ENCODE measurements at regions of chr6 and their contacts with region 1.

Region 1: DNA sequence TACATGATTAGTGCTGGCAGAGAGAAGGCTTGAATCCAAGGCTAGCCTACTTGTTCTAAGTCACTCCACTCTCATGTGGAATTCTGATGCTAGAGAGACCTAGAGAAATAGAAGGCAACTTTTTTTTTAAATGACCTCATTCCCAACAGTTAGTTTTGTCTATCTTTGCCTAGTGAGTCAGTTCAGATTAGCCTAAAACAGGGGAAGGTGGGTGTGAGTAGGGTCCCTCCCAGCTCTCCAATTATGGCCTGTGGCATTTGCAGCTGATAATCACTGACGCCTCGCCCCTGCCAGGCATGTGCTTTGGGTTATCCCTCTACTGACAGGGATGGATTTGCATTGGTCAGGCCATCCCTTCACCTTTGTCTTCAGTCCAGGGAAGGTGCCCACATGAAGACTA is 13.6 kb downstream of the TXLNB start:
- DNase-seq: no peak
- ATAC-seq: no peak
- H3K4me3 ChIP-seq: no peak overlapping the region
- H3K4me3 Mint-ChIP-seq: peak overlapping the region; percentile 30
- H3K27ac ChIP-seq: peak overlapping the region; percentile 36 to 79
- H3K27ac Mint-ChIP-seq: peak overlapping the region; percentile 96
- H3K4me1 ChIP-seq: peaks cover 36 to 39% of the 10 kb centered on the region in 2 donors
- H3K4me1 Mint-ChIP-seq: peaks cover 69% of the 10 kb centered on the region
- H3K27me3 ChIP-seq: no peaks in the 10 kb centered on the region
- H3K27me3 Mint-ChIP-seq: no peaks in the 10 kb centered on the region
- CTCF ChIP-seq: no peak

Region 2: GRCh38 chr6:139265512-139266190 is 12.5 kb before region 1 on chr6:
- CTCF ChIA-PET with region 1: interaction called, 4 read pairs
- POLR2A ChIA-PET with region 1: interaction called, 10 read pairs
- intact Hi-C with region 1: loop called (anchors 1 kb)
- DNase-seq: no peak
- ATAC-seq: no peak
- H3K4me3 ChIP-seq: no peak overlapping the region
- H3K4me3 Mint-ChIP-seq: peak overlapping the region; percentile 40
- H3K27ac ChIP-seq: no peak overlapping the region
- H3K27ac Mint-ChIP-seq: peak overlapping the region; percentile 70
- H3K4me1 ChIP-seq: peaks cover 30 to 32% of the 10 kb centered on the region in 2 donors
- H3K4me1 Mint-ChIP-seq: peaks cover 50% of the 10 kb centered on the region
- H3K27me3 ChIP-seq: no peaks in the 10 kb centered on the region
- H3K27me3 Mint-ChIP-seq: no peaks in the 10 kb centered on the region
- CTCF ChIP-seq: no peak

Measured in B cell (primary cell).